CD4-positive, alpha-beta T cell (primary cell): ENCODE measurements at regions of chr1 and their contacts with region 1.

Region 1: DNA sequence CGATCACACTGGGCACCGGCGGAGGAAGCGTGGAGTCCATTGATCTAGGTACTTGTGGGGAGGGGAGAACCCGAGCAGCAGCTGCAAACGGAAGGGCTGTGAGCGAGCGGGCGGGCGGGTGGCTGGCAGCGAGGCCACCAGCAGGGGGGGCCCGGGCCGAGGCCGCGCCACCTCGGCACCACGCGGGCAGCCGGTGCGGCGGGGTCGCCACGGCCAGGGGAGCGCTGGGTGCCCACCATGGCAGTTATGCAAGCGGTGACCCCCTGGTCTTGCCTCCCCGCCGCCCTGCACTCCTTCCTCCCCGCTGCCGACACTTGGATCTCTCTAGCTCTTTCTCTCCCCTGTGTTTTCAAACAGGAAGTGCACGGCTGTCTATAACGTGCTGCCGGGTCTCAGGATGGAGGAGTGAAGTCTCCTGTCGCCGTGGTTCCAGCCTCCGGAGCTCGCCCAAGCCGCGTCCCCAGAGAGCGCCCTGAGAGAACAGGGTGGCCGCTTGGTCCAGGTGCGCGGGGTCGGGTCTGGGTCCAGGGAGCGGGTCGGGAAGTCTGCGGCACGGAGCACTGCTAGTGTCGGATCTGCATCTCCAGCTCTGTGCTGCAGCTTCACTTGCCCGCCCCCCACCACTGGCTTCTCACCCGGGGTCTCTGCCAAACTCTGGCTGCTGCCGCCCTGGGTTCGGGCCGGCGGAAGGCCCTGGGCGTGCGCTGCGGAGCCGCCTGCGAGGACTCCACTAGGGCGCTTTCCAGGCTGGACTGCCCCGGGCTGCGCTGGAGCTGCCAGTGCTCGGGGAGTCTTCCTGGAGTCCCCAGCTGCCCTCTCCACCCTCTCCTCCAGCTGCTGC is 22.7 kb downstream of the LRRC8D start:
- DNase-seq: peak; percentile 65 to 91 (median 72)
- ATAC-seq: peak; percentile 74
- H3K4me3 ChIP-seq: peak overlapping the region; percentile 75
- H3K4me3 Mint-ChIP-seq: peak overlapping the region; percentile 95
- H3K27ac ChIP-seq: peak overlapping the region; percentile 81 to 90
- H3K27ac Mint-ChIP-seq: peak overlapping the region; percentile 95
- H3K4me1 ChIP-seq: peaks cover 36% of the 10 kb centered on the region
- H3K4me1 Mint-ChIP-seq: peaks cover 54% of the 10 kb centered on the region
- H3K27me3 ChIP-seq: no peaks in the 10 kb centered on the region
- H3K27me3 Mint-ChIP-seq: no peaks in the 10 kb centered on the region
- CTCF ChIP-seq: peak; percentile 60

Region 2: DNA sequence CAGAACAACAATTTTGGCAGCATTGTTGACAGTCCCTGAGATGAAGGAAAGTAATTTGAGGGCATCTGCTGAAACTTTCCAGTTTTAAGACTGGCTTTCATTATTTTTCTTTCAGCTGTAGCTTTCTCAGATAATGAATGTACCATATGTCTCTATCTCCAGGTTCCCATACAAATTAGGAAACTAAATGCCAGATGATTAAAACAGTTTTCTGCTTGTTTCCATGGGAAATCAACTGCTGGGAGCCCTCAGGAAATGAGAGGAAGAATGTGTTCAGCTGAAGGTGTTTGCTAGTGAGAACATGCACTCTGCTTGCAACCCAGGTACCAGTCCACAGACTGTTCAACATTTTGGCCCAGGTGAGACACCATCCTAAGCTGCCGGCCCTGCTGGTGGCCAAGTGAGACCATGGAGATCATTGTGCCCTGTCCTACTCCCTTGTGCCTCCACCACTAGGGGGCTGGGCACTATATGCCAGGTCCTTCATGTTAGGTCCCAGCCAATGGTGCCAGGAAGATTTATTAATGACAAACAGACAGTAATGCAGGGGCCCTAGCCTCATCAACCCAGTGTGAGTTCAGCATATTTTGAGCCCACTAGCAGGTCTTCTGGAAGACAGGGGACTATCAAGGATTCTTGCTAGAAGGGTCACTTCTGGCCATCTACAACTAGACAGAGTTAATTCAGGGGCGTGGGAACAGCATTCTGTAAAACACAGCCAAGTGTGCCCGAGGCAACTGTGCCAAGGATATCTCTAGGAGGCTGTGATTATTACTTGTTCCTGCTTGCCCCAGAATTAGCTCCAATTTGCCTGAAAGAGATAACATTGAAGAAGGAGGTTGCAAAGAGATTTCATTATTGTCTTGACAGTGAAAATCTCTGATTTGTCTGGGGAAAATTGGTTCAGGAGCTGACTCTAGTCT is 227.6 kb before region 1 on chr1:
- CTCF ChIA-PET with region 1: no interaction called
- POLR2A ChIA-PET with region 1: interaction called, 16 read pairs
- intact Hi-C with region 1: no loop called
- DNase-seq: peak in 3 of 14 experiments; percentile 48 to 66 (median 56)
- ATAC-seq: no peak
- H3K4me3 ChIP-seq: no peak overlapping the region
- H3K4me3 Mint-ChIP-seq: no peak overlapping the region
- H3K27ac ChIP-seq: no peak overlapping the region
- H3K27ac Mint-ChIP-seq: peak overlapping the region; percentile 99
- H3K4me1 ChIP-seq: peaks cover 42% of the 10 kb centered on the region
- H3K4me1 Mint-ChIP-seq: peaks cover 90% of the 10 kb centered on the region
- H3K27me3 ChIP-seq: no peaks in the 10 kb centered on the region
- H3K27me3 Mint-ChIP-seq: no peaks in the 10 kb centered on the region
- CTCF ChIP-seq: peak; percentile 17

Region 3: DNA sequence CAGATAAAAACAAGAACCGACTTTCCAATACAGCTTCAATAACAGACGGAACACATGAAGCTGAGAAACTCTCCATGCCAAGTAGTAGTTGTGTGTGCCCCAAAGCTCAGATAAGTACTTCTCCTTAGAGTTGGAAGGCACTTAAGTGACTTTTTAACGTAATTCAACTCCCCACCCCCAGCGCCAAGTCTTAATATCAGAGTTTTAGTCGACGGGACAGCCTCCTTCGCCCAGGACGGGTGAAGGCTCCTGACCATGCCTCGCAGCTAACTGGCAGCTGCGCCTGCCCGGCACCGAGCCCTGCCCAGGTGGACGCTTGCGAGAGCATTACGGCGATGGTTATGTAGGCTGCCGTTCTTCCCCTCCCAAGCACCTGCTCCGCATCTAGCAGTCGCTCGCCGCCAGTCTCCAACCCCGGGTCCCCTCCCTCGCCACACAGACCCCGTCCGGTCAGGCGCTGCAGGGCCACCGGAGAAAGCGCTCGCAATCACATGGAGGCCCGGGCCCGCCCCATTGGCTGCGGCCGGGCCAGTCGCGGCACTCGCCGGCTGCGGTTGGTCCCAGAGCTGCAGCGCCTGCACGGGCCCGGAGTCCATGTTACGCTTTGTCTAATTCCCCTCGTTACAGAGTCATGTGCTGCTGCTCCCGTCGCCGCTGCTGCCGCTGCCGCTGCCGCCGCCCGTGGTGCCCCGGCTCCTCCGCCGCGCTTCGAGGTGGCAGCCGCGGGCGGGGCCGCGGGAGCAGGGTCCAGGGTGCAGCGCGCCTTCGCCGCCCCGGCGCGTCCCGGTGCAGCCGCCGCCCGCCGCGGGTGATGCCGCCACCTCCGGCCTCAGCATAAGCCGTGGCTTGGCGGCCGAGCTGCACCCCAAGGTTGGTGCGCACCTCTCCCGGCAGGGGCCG is 22.8 kb before region 1 on chr1 and contains the start of gene LRRC8D:
- CTCF ChIA-PET with region 1: interaction called, 11 read pairs
- POLR2A ChIA-PET with region 1: interaction called, 60 read pairs
- intact Hi-C with region 1: loop called in 1 of 2 experiments (anchors 2 kb)
- DNase-seq: peak; percentile 35 to 87 (median 51)
- ATAC-seq: peak; percentile 58
- H3K4me3 ChIP-seq: peak within 1 kb of the TSS; percentile 74
- H3K4me3 Mint-ChIP-seq: peak within 1 kb of the TSS; percentile 92
- H3K27ac ChIP-seq: peak within 1 kb of the TSS in 1 of 2 donors; percentile 59
- H3K27ac Mint-ChIP-seq: peak within 1 kb of the TSS; percentile 82
- H3K4me1 ChIP-seq: peaks cover 19% of the 10 kb centered on the region
- H3K4me1 Mint-ChIP-seq: peaks cover 44% of the 10 kb centered on the region
- H3K27me3 ChIP-seq: peaks cover 0 to 3% of the 10 kb centered on the region in 2 experiments
- H3K27me3 Mint-ChIP-seq: no peaks in the 10 kb centered on the region
- CTCF ChIP-seq: no peak
- total RNA-seq, gene LRRC8D: 15.5 to 18.2 TPM

Region 4: GRCh38 chr1:89855413-89856123 is 12.1 kb after region 1 on chr1:
- CTCF ChIA-PET with region 1: interaction called, 22 read pairs
- POLR2A ChIA-PET with region 1: interaction called, 41 read pairs
- intact Hi-C with region 1: loop called in 1 of 2 experiments (anchors 1 kb)
- DNase-seq: peak in 4 of 14 experiments; percentile 14 to 83 (median 77)
- ATAC-seq: peak; percentile 82
- H3K4me3 ChIP-seq: peak overlapping the region; percentile 17
- H3K4me3 Mint-ChIP-seq: no peak overlapping the region
- H3K27ac ChIP-seq: peak overlapping the region; percentile 71 to 88
- H3K27ac Mint-ChIP-seq: no peak overlapping the region
- H3K4me1 ChIP-seq: peaks cover 14% of the 10 kb centered on the region
- H3K4me1 Mint-ChIP-seq: peaks cover 14% of the 10 kb centered on the region
- H3K27me3 ChIP-seq: no peaks in the 10 kb centered on the region
- H3K27me3 Mint-ChIP-seq: no peaks in the 10 kb centered on the region
- CTCF ChIP-seq: no peak

Region 5: GRCh38 chr1:89873770-89874169 is 30.3 kb after region 1 on chr1:
- CTCF ChIA-PET with region 1: interaction called, 21 read pairs
- POLR2A ChIA-PET with region 1: interaction called, 59 read pairs
- intact Hi-C with region 1: loop called (anchors 1 to 2 kb)
- DNase-seq: peak in 3 of 14 experiments; percentile 47 to 55 (median 52)
- ATAC-seq: peak; percentile 35
- H3K4me3 ChIP-seq: no peak overlapping the region
- H3K4me3 Mint-ChIP-seq: peak overlapping the region; percentile 14
- H3K27ac ChIP-seq: no peak overlapping the region
- H3K27ac Mint-ChIP-seq: peak overlapping the region; percentile 80
- H3K4me1 ChIP-seq: peaks cover 13% of the 10 kb centered on the region
- H3K4me1 Mint-ChIP-seq: peaks cover 79% of the 10 kb centered on the region
- H3K27me3 ChIP-seq: no peaks in the 10 kb centered on the region
- H3K27me3 Mint-ChIP-seq: no peaks in the 10 kb centered on the region
- CTCF ChIP-seq: no peak

Region 6: GRCh38 chr1:89918127-89918793 is 74.8 kb after region 1 on chr1:
- CTCF ChIA-PET with region 1: interaction called, 13 read pairs
- POLR2A ChIA-PET with region 1: interaction called, 5 read pairs
- intact Hi-C with region 1: loop called in 1 of 2 experiments (anchors 5 kb)
- DNase-seq: no peak
- ATAC-seq: no peak
- H3K4me3 ChIP-seq: no peak overlapping the region
- H3K4me3 Mint-ChIP-seq: no peak overlapping the region
- H3K27ac ChIP-seq: no peak overlapping the region
- H3K27ac Mint-ChIP-seq: no peak overlapping the region
- H3K4me1 ChIP-seq: no peaks in the 10 kb centered on the region
- H3K4me1 Mint-ChIP-seq: peaks cover 18% of the 10 kb centered on the region
- H3K27me3 ChIP-seq: no peaks in the 10 kb centered on the region
- H3K27me3 Mint-ChIP-seq: no peaks in the 10 kb centered on the region
- CTCF ChIP-seq: no peak

Region 7: DNA sequence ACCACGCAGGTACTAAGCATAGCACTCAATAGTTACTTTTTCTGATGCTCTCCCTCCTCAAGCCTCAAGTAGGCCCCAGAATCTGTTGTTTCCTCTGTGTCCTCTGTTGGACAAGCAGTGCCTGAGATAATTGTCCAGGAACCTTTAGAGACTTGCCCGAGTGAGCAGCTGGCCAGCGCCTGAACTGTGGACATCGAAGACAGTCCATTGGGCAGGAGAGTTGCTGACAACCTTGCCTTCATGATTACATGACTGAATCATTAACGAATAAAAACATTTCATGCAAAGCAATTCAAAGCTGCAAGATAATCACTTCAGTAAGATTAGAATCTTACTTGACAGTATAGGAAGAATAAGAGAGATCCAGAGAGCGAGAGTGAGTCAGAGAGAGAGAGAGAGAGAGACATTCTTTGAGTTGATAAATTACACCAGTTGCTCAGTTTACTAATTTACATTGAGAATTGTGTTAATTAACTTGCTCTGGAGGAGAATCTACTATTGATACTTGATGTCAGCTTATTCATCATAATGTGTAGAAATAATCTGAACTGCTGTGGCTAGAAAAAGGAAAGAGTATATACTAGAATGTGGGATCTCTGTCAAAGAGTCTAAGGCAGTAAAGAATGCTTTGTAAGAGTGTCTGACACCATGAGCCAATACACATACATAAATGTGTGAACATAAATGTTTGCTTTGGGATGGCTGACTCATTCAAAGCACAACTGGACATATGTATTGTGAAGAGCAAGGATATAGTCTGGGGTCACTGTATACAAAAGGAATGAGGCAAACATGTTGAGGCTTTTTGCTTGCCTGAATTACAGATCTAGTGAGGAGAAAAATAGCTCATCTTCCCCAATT is 367.4 kb after region 1 on chr1:
- CTCF ChIA-PET with region 1: no interaction called
- POLR2A ChIA-PET with region 1: no interaction called
- intact Hi-C with region 1: no loop called
- DNase-seq: no peak
- ATAC-seq: no peak
- H3K4me3 ChIP-seq: no peak overlapping the region
- H3K4me3 Mint-ChIP-seq: no peak overlapping the region
- H3K27ac ChIP-seq: no peak overlapping the region
- H3K27ac Mint-ChIP-seq: no peak overlapping the region
- H3K4me1 ChIP-seq: no peaks in the 10 kb centered on the region
- H3K4me1 Mint-ChIP-seq: no peaks in the 10 kb centered on the region
- H3K27me3 ChIP-seq: no peaks in the 10 kb centered on the region
- H3K27me3 Mint-ChIP-seq: peaks cover 22% of the 10 kb centered on the region
- CTCF ChIP-seq: no peak

Region 8: DNA sequence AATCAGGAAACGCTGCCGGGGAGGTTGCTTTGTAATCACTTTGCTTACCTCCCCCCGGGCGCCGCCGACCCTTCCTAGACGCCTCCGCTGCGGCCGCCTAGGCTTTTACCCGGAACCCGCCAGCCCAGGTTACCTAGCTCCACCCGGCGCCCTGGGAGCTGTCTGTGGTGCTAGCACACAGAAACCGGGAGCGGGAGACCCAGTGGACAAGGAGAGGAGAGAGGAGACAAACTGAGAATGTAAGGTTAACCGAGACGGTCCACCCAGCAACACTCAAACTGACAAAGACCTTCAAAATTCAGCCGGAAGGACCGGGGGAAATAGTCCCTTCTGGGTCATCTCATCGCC is 863.8 kb after region 1 on chr1:
- CTCF ChIA-PET with region 1: no interaction called
- POLR2A ChIA-PET with region 1: no interaction called
- intact Hi-C with region 1: no loop called
- DNase-seq: peak in 1 of 14 experiments; percentile 47
- ATAC-seq: peak; percentile 51
- H3K4me3 ChIP-seq: no peak overlapping the region
- H3K4me3 Mint-ChIP-seq: peak overlapping the region; percentile 35
- H3K27ac ChIP-seq: no peak overlapping the region
- H3K27ac Mint-ChIP-seq: no peak overlapping the region
- H3K4me1 ChIP-seq: peaks cover 23% of the 10 kb centered on the region
- H3K4me1 Mint-ChIP-seq: peaks cover 20% of the 10 kb centered on the region
- H3K27me3 ChIP-seq: peaks cover 82 to 91% of the 10 kb centered on the region in 2 experiments
- H3K27me3 Mint-ChIP-seq: peaks cover 97% of the 10 kb centered on the region
- CTCF ChIP-seq: no peak